B cell (primary cell): ENCODE measurements at regions of chrX and their contacts with region 1.

Region 1: GRCh38 chrX:24732766-24733500 is 39.2 kb downstream of the POLA1 start:
- DNase-seq: no peak
- ATAC-seq: no peak
- H3K4me3 ChIP-seq: no peak overlapping the region
- H3K4me3 Mint-ChIP-seq: no peak overlapping the region
- H3K27ac ChIP-seq: no peak overlapping the region
- H3K27ac Mint-ChIP-seq: no peak overlapping the region
- H3K4me1 ChIP-seq: no peaks in the 10 kb centered on the region
- H3K4me1 Mint-ChIP-seq: no peaks in the 10 kb centered on the region
- H3K27me3 ChIP-seq: no peaks in the 10 kb centered on the region
- H3K27me3 Mint-ChIP-seq: no peaks in the 10 kb centered on the region
- CTCF ChIP-seq: no peak

Region 2: DNA sequence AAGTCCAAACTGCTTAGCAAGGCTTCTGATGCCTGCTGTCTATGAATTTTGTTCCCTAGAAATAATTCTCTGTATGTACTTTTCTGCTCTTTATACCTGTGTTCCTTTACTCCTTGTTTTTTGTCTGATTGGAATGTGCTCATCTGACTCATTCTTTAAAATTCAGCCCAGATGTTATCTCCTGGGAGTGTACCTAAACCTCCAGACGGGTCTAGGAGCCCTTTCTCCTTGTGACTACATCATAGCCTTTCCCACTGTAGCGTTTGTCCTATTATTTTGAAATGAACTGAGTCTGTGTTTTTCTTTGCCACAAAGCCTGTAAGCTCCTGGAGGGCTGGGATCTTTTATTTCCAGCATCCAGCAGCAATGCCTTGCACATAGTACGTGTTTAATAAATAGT is 12.9 kb before region 1 on chrX:
- CTCF ChIA-PET with region 1: no interaction called
- POLR2A ChIA-PET with region 1: no interaction called
- intact Hi-C with region 1: loop called (anchors 2 kb)
- DNase-seq: no peak
- ATAC-seq: no peak
- H3K4me3 ChIP-seq: no peak overlapping the region
- H3K4me3 Mint-ChIP-seq: no peak overlapping the region
- H3K27ac ChIP-seq: no peak overlapping the region
- H3K27ac Mint-ChIP-seq: no peak overlapping the region
- H3K4me1 ChIP-seq: no peaks in the 10 kb centered on the region
- H3K4me1 Mint-ChIP-seq: peaks cover 2% of the 10 kb centered on the region
- H3K27me3 ChIP-seq: no peaks in the 10 kb centered on the region
- H3K27me3 Mint-ChIP-seq: no peaks in the 10 kb centered on the region
- CTCF ChIP-seq: no peak

Region 3: GRCh38 chrX:24748202-24748843 is 15.4 kb after region 1 on chrX:
- CTCF ChIA-PET with region 1: no interaction called
- POLR2A ChIA-PET with region 1: no interaction called
- intact Hi-C with region 1: no loop called
- DNase-seq: no peak
- ATAC-seq: no peak
- H3K4me3 ChIP-seq: no peak overlapping the region
- H3K4me3 Mint-ChIP-seq: no peak overlapping the region
- H3K27ac ChIP-seq: no peak overlapping the region
- H3K27ac Mint-ChIP-seq: no peak overlapping the region
- H3K4me1 ChIP-seq: no peaks in the 10 kb centered on the region
- H3K4me1 Mint-ChIP-seq: no peaks in the 10 kb centered on the region
- H3K27me3 ChIP-seq: no peaks in the 10 kb centered on the region
- H3K27me3 Mint-ChIP-seq: no peaks in the 10 kb centered on the region
- CTCF ChIP-seq: no peak